Natural killer cell (primary cell): ENCODE measurements at regions of chr2 and their contacts with region 1.

Region 1: DNA sequence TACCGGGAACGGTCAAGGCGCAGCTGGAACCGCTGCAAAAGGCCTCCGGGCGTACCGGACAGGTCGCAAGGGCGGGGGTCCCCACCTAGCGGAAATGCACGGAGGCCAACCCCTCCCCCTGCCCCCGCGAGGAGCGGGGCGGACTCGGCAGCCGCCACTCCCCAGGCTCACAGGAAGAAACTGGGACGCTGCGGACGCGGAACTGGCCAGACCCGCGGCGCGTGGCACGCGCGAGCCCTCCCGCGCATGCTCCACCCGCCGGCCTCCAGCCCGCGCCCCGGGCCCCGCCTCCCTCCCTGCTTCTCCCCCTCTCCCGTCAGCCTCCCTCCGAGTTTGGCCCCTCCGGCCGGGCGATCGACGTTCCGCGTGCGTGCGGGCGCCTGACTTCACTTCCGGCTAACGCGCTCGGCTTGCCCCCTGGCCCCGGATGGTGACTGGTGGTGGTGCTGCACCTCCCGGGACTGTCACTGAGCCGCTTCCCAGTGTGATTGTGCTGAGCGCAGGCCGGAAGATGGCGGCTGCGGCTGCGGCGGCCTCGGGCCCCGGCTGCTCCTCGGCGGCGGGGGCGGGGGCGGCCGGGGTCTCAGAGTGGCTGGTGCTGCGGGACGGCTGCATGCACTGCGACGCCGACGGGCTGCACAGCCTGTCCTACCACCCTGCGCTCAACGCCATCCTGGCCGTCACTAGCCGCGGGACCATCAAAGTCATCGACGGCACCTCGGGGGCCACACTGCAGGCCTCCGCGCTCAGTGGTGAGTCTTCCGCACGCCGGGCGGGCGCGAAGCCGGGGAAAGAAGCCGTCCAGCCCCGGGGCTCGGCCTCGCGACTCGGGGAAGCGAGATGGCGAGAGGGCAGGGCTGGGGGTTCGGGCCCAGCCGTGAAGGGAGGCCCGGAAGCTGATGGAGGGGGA is at the start of gene BIRC6:
- DNase-seq: peak; percentile 90 to 93
- ATAC-seq: peak; percentile 84 to 94 (median 89)
- H3K4me3 ChIP-seq: peak within 1 kb of the TSS; percentile 98
- H3K4me3 Mint-ChIP-seq: peak within 1 kb of the TSS; percentile 89
- H3K27ac ChIP-seq: peak within 1 kb of the TSS; percentile 99
- H3K27ac Mint-ChIP-seq: peak within 1 kb of the TSS; percentile 83 to 93
- H3K4me1 ChIP-seq: peaks cover 12% of the 10 kb centered on the region
- H3K4me1 Mint-ChIP-seq: peaks cover 36 to 49% of the 10 kb centered on the region in 2 donors
- H3K27me3 ChIP-seq: no peaks in the 10 kb centered on the region
- H3K27me3 Mint-ChIP-seq: no peaks in the 10 kb centered on the region
- CTCF ChIP-seq: no peak
- total RNA-seq, gene BIRC6: 190 to 225 (median 224) TPM

Region 2: DNA sequence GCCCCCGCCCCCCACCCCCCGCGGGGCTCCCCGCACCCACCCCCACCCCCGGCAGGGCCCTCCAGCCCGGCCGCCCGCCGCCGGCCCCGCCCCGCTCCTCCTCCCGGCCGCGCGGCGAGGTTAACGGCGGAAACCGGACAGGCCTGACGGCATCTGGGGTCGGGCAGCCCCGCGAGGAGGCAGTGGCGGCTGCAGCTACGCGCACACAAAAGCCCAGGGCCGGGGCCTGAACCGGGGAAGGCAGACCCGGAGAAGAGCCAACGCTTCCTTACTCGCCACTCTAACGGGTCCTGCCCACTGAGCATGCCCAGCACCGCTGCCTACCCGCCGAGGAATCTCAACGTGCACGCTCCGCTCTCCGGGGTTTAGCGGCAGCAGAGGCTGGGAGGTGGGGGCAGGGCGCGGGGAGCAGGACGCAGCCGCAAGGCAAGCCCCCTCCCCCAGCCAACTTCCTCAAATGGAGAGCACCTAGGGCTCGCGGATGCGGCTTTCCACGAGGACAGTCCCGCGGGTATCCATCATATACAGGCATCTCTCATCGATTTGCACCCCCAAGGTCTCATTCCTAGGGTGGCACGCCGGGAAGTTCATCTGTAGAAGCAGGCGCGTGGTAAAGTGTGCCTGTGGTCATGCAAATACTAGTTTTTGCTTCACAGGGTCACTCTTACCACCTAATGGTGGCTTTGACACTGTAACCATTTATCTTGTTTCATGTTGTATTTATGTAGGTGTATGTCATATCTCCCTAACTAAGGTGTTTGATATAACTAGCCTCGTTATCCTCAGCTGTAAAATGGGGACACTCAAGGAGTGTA is 346.1 kb before region 1 on chr2 and contains the start of gene MEMO1:
- intact Hi-C with region 1: loop called (anchors 5 kb)
- DNase-seq: peak; percentile 83 to 95
- ATAC-seq: peak; percentile 72 to 88 (median 73)
- H3K4me3 ChIP-seq: peak within 1 kb of the TSS; percentile 68
- H3K4me3 Mint-ChIP-seq: peak within 1 kb of the TSS; percentile 92
- H3K27ac ChIP-seq: peak within 1 kb of the TSS; percentile 71
- H3K27ac Mint-ChIP-seq: peak within 1 kb of the TSS; percentile 89 to 93
- H3K4me1 ChIP-seq: peaks cover 22% of the 10 kb centered on the region
- H3K4me1 Mint-ChIP-seq: peaks cover 34 to 42% of the 10 kb centered on the region in 2 donors
- H3K27me3 ChIP-seq: no peaks in the 10 kb centered on the region
- H3K27me3 Mint-ChIP-seq: no peaks in the 10 kb centered on the region
- CTCF ChIP-seq: no peak
- total RNA-seq, gene MEMO1: 48.6 to 51.9 (median 51.7) TPM

Region 3: GRCh38 chr2:32277674-32278482 is 79.1 kb before region 1 on chr2 and contains the start of gene YIPF4:
- intact Hi-C with region 1: loop called (anchors 5 kb)
- DNase-seq: peak; percentile 94 to 95
- ATAC-seq: peak; percentile 95 to 97 (median 97)
- H3K4me3 ChIP-seq: peak within 1 kb of the TSS; percentile 97
- H3K4me3 Mint-ChIP-seq: peak within 1 kb of the TSS; percentile 93
- H3K27ac ChIP-seq: peak within 1 kb of the TSS; percentile 91
- H3K27ac Mint-ChIP-seq: peak within 1 kb of the TSS; percentile 98 to 99
- H3K4me1 ChIP-seq: peaks cover 17% of the 10 kb centered on the region
- H3K4me1 Mint-ChIP-seq: peaks cover 31 to 32% of the 10 kb centered on the region in 2 donors
- H3K27me3 ChIP-seq: no peaks in the 10 kb centered on the region
- H3K27me3 Mint-ChIP-seq: peaks cover 0 to 5% of the 10 kb centered on the region in 2 donors
- CTCF ChIP-seq: no peak
- total RNA-seq, gene YIPF4: 17.9 to 34.9 (median 18.1) TPM

Region 4: GRCh38 chr2:32647180-32647651 is 290.2 kb after region 1 on chr2:
- intact Hi-C with region 1: no loop called
- DNase-seq: no peak
- ATAC-seq: no peak
- H3K4me3 ChIP-seq: no peak overlapping the region
- H3K4me3 Mint-ChIP-seq: no peak overlapping the region
- H3K27ac ChIP-seq: no peak overlapping the region
- H3K27ac Mint-ChIP-seq: no peak overlapping the region
- H3K4me1 ChIP-seq: no peaks in the 10 kb centered on the region
- H3K4me1 Mint-ChIP-seq: no peaks in the 10 kb centered on the region
- H3K27me3 ChIP-seq: no peaks in the 10 kb centered on the region
- H3K27me3 Mint-ChIP-seq: no peaks in the 10 kb centered on the region
- CTCF ChIP-seq: no peak